Ascending aorta (tissue), 2 donors: ENCODE measurements at regions of chrX and their contacts with region 1.

Region 1: GRCh38 chrX:37745354-37745753 is 34.5 kb upstream of the CYBB start:
- DNase-seq: peak; percentile 29 to 77
- H3K4me3 ChIP-seq: no peak overlapping the region
- H3K27ac ChIP-seq: no peak overlapping the region
- H3K4me1 ChIP-seq: no peaks in the 10 kb centered on the region
- H3K27me3 ChIP-seq: no peaks in the 10 kb centered on the region
- CTCF ChIP-seq: peak; percentile 42 to 76 (median 66)

Region 2: GRCh38 chrX:37685452-37686353 is 59.7 kb before region 1 on chrX and contains the start of gene XK:
- intact Hi-C with region 1: no loop called
- DNase-seq: peak in 1 of 2 donors; percentile 71
- H3K4me3 ChIP-seq: peak within 1 kb of the TSS; percentile 66 to 70
- H3K27ac ChIP-seq: peak within 1 kb of the TSS; percentile 79 to 83
- H3K4me1 ChIP-seq: no peaks in the 10 kb centered on the region
- H3K27me3 ChIP-seq: no peaks in the 10 kb centered on the region
- CTCF ChIP-seq: no peak
- total RNA-seq, gene XK: 0.53 TPM

Region 3: DNA sequence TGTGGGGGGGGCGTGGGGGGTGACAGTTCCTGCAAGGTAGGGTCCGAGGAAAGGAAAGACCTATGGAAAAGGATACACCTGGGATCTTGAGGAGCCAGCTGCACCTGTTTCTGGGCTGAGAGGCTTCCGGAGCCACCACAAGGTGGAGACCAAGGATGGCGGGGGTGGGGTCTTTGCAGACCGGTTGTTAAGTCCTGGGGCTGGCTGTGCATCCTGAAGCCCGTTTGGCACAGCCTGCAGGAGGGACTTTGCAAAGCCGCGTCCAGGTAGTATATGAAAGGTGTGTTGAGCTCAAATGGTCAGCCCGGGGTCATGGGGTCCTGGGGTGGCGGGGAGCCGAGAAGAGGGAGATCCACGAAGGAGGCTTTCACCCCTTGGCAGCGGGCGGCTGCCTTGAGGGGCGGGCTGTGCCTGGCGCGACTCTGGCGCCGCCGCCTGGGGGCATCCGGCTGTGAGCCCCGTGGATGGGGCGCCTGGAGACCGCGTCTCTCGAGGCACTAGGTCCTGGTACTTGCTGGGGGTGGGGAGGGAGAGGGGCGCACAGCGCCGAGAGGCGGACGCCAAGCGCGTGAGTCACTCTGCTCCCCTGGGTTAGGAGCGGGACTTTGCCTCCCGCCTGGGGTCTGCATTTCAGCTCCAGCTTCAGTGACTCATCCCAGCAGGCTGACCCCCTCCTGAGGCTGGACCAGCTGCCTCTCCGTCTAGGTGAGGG is 160.2 kb after region 1 on chrX:
- intact Hi-C with region 1: loop called (anchors 10 kb)
- DNase-seq: no peak
- H3K4me3 ChIP-seq: peak overlapping the region; percentile 27 to 50
- H3K27ac ChIP-seq: no peak overlapping the region
- H3K4me1 ChIP-seq: no peaks in the 10 kb centered on the region
- H3K27me3 ChIP-seq: no peaks in the 10 kb centered on the region
- CTCF ChIP-seq: peak in 2 of 3 experiments; percentile 15 to 31

Region 4: DNA sequence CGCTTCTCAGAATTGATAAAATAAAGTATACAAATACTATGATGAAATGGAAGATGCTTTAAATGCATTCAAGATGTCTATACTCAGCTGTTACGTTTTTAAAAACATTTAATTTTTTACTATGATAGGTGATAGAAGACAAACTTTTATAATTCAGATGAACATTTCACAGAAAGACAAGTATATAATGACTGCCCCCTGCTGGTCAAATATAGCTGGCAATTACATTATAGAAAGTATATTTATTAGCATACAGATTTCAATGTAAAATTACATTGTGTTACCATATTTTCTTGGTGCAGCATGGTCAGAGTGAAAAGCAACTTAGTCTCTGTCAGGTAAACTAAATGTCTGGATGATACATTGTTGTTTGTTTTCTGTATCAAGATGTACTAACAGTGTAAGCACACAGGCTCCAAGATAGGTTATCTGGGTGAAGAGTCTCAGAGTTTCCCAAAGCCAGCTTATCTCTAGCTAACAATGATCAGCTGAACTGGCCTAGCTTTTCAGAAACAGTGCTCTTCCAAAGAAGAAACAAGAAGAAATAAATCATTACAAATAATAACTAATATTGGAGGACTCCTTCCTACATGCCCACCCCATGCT is 421.2 kb after region 1 on chrX:
- intact Hi-C with region 1: loop called (anchors 10 kb)
- DNase-seq: no peak
- H3K4me3 ChIP-seq: no peak overlapping the region
- H3K27ac ChIP-seq: no peak overlapping the region
- H3K4me1 ChIP-seq: no peaks in the 10 kb centered on the region
- H3K27me3 ChIP-seq: no peaks in the 10 kb centered on the region
- CTCF ChIP-seq: peak in 2 of 3 experiments; percentile 38 to 54